Activated T-helper 1 cell treated with anti-CD3 and anti-CD28 coated beads, Interleukin-12 subunit alpha, Interleukin-12 subunit beta, Interleukin-2, Interleukin-4 antibody, amounts not matched to agents 30 ng/mL and 10 ng/mL and 1 ng/mL, durations not matched to agents 14 hours and 24 hours and 36 hours (primary cell): ENCODE measurements at regions of chr7 and their contacts with region 1.

Region 1: DNA sequence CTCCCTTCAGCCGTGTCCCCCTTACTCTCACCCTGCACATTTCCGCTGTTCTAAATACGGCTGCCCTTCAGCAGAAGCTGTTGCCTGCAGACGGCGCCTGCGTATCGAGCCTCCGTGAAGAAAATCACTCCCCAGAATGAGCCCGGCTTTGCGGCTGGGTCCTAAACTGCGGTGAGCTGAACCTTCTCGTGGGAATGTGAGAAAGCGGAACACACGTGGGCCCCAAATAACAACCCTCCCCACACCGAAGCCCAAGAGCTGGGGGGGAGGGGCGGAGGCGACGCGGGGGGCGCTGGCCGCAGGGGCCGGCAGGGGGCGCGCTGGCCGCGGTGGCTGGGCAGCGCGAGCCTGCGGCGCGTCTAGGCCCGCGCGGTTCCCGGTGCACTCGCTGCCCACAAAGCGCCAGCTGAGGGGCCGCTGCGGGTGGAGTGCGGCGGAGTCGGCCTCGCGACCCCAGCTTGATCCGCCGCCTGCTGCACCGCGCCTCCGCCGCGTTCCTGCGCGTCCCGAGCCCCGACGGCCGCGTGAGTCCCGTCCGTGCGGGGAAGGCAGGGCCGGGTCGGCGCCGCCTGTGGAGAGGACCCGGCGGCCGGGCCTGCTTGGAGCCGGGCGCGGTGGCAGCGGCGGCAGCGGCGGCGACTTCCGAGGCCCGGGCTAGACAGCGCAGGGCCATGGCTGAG is at the start of gene ZNF398:
- DNase-seq: peak; percentile 74
- H3K4me3 Mint-ChIP-seq: peak within 1 kb of the TSS; percentile 89
- H3K27ac Mint-ChIP-seq: peak within 1 kb of the TSS; percentile 91
- H3K4me1 Mint-ChIP-seq: peaks cover 42% of the 10 kb centered on the region
- H3K27me3 Mint-ChIP-seq: no peaks in the 10 kb centered on the region
- total RNA-seq, gene ZNF398: 14.1 and 14.4 TPM in 2 replicates

Region 2: DNA sequence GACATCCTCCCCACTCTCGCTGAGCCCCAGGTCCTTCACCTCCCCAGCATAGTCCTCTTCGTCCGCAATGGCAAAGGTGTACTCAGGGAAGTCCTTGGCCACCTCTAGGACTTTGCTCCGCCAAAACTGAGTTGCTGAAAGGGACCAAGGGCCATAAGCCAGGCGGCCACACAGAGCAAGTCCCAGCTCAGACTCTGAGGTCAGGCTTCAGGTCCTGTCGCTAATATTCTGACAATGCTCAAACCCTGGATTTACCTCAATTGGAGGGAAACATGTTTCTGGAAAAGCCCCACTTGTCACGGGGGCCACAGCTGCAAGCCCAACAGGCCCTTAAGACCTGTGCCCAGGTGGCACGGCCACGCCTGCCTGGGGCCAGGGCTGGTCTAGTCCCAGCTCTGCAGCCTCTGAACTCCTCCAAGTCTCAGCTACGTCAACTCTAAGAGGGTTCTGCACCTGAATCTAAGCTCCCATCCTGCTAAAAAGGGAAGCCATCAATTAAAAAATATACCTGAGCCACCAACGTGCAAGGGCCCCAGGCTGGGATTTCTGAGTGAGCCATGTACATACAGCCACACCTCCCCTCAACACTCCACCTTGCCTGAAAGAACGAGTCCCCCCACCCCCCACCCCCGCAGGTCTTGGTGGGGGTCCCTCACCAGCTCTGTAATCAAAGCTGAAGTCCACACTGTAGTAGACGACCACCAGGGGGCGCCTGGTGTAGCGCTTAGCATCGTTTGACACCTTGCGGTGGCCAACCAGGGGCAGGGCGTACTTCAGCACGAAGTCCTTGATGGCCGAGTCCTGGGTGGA is 141.8 kb before region 1 on chr7:
- intact Hi-C with region 1: loop called (anchors 5 kb)
- DNase-seq: peak; percentile 65
- H3K4me3 Mint-ChIP-seq: no peak overlapping the region
- H3K27ac Mint-ChIP-seq: no peak overlapping the region
- H3K4me1 Mint-ChIP-seq: no peaks in the 10 kb centered on the region
- H3K27me3 Mint-ChIP-seq: no peaks in the 10 kb centered on the region

Region 3: DNA sequence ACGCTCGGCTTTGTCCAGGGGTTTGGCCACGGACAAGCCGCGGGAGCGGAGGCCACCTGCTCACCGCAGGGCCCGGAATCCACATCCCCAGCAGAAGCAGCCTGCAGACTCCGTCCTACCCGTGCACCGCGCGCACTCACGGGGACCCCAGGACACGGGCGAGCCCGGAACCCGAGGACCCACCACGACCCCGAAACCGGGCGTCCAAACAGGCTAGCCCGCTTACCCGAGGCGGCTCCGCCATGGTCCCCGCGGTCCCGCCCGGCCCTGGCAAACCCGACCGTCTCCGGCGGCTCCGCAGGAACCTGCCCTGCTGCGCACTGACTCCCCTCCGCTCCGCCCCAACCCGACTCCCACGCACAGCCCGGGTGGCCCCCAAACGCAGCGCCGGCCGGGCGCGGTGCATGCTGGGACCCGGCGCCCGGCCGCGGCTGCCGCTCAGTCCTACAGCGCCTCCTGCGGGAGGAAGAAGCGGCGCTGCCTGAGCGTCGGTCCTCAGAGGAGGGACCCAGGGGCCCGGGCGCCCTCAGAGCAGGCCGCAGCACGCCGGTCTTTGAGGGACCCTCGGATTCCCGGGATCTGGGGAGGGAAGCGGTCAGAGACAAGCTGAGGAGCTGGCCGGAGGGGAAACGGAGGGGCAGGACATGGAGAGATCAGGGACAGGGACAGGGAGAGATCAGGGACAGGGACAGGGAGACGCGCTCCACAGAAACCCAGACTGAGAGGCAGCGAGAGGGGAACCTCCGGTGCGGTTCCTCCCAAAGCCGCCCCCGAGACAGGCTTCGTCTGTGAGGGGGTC is 56.6 kb before region 1 on chr7 and contains the start of gene ZNF786:
- intact Hi-C with region 1: loop called (anchors 1 kb)
- DNase-seq: peak; percentile 87
- H3K4me3 Mint-ChIP-seq: peak within 1 kb of the TSS; percentile 99
- H3K27ac Mint-ChIP-seq: peak within 1 kb of the TSS; percentile 100
- H3K4me1 Mint-ChIP-seq: peaks cover 17% of the 10 kb centered on the region
- H3K27me3 Mint-ChIP-seq: peaks cover 2% of the 10 kb centered on the region
- total RNA-seq, gene ZNF786: 9.9 and 10.9 TPM in 2 replicates

Region 4: GRCh38 chr7:149245244-149245643 is 98.0 kb after region 1 on chr7:
- intact Hi-C with region 1: loop called (anchors 5 kb)
- DNase-seq: no peak
- H3K4me3 Mint-ChIP-seq: no peak overlapping the region
- H3K27ac Mint-ChIP-seq: peak overlapping the region; percentile 80
- H3K4me1 Mint-ChIP-seq: peaks cover 47% of the 10 kb centered on the region
- H3K27me3 Mint-ChIP-seq: no peaks in the 10 kb centered on the region

Region 5: DNA sequence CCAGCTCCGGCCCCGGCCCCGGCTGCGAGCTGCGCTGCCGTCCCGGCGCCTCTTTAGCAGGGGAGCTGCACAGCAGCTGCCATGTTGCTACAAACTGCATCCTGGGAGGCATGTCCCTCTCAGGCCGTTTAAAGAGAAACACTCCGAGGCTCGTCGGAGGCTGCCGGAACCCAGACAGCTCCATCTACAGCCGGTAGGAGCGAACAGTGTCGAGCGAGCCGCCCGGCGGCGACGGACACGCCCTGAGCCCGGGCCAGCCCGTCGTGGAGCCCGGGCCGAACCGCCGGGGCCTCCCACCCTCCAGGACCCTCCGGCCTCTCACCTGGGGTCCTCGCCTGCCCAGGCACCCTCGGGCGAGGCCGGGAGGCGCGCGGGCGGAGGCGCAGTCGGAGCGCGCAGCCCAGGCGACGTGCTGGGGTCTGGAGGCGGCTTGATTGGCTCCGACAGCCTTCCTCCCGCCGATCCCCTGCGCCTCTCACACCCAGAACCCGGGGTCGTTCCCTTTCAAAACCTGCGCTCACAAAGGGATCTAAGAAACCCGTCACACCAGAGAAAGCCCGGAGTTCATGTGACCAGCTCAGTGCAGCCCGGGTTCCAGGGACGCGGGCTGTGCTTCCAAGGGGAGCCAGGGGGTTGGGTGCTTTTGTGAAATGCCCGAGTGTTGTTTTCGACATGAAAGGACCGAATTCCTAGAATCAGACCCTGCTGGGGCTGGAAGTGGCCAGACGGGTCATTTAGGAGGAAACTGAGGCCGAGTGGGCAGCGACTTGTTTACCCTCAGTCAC is 313.5 kb after region 1 on chr7 and contains the start of gene ZNF777:
- intact Hi-C with region 1: loop called (anchors 2 kb)
- DNase-seq: peak; percentile 80
- H3K4me3 Mint-ChIP-seq: peak within 1 kb of the TSS; percentile 85
- H3K27ac Mint-ChIP-seq: peak within 1 kb of the TSS; percentile 66
- H3K4me1 Mint-ChIP-seq: peaks cover 23% of the 10 kb centered on the region
- H3K27me3 Mint-ChIP-seq: peaks cover 27% of the 10 kb centered on the region
- total RNA-seq, gene ZNF777: 19.0 and 19.3 TPM in 2 replicates

Region 6: GRCh38 chr7:149838224-149838947 is 691.2 kb after region 1 on chr7 and contains the start of gene ZNF862:
- intact Hi-C with region 1: loop called (anchors 1 kb)
- DNase-seq: peak; percentile 95
- H3K4me3 Mint-ChIP-seq: peak within 1 kb of the TSS; percentile 89
- H3K27ac Mint-ChIP-seq: peak within 1 kb of the TSS; percentile 75
- H3K4me1 Mint-ChIP-seq: peaks cover 25% of the 10 kb centered on the region
- H3K27me3 Mint-ChIP-seq: peaks cover 9% of the 10 kb centered on the region
- total RNA-seq, gene ZNF862: 14.2 and 19.3 TPM in 2 replicates